MCF 10A (cell line): ENCODE measurements at regions of chr1 and their contacts with region 1.

Region 1: GRCh38 chr1:91924146-91924545 is 25.1 kb upstream of the BRDT start:
- DNase-seq: peak; percentile 67
- H3K4me3 Mint-ChIP-seq: no peak overlapping the region
- H3K27ac Mint-ChIP-seq: peak overlapping the region; percentile 87
- H3K4me1 Mint-ChIP-seq: peaks cover 17% of the 10 kb centered on the region
- H3K27me3 Mint-ChIP-seq: no peaks in the 10 kb centered on the region
- CTCF ChIP-seq: no peak

Region 2: DNA sequence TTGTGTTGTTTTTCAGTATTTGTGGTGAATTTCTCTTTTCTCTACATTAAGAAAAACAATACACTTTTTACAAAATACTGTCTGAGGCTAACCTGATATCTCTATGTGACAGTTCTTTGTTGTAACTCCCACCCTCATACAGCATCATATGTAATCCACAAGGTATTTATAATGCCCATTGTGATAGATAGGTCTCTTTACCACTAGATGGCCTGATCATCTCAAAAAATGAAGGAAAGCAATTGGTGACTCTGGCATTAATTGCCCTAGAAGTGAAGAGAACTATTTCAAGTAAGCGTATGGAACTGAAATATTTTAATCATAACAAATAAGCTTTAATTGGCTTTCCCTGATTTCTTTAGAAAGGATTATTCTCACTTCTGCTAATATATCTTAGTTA is 483.3 kb before region 1 on chr1:
- CTCF ChIA-PET with region 1: interaction called, 4 read pairs
- POLR2A ChIA-PET with region 1: no interaction called
- intact Hi-C with region 1: loop called (anchors 2 kb)
- DNase-seq: peak; percentile 32
- H3K4me3 Mint-ChIP-seq: no peak overlapping the region
- H3K27ac Mint-ChIP-seq: no peak overlapping the region
- H3K4me1 Mint-ChIP-seq: no peaks in the 10 kb centered on the region
- H3K27me3 Mint-ChIP-seq: peaks cover 63% of the 10 kb centered on the region
- CTCF ChIP-seq: peak; percentile 8

Region 3: GRCh38 chr1:91635763-91636162 is 288.4 kb before region 1 on chr1:
- CTCF ChIA-PET with region 1: no interaction called
- POLR2A ChIA-PET with region 1: no interaction called
- intact Hi-C with region 1: no loop called
- DNase-seq: no peak
- H3K4me3 Mint-ChIP-seq: no peak overlapping the region
- H3K27ac Mint-ChIP-seq: no peak overlapping the region
- H3K4me1 Mint-ChIP-seq: no peaks in the 10 kb centered on the region
- H3K27me3 Mint-ChIP-seq: no peaks in the 10 kb centered on the region
- CTCF ChIP-seq: no peak